Caco-2 (cell line): ENCODE measurements at regions of chr2 and their contacts with region 1.

Region 1: DNA sequence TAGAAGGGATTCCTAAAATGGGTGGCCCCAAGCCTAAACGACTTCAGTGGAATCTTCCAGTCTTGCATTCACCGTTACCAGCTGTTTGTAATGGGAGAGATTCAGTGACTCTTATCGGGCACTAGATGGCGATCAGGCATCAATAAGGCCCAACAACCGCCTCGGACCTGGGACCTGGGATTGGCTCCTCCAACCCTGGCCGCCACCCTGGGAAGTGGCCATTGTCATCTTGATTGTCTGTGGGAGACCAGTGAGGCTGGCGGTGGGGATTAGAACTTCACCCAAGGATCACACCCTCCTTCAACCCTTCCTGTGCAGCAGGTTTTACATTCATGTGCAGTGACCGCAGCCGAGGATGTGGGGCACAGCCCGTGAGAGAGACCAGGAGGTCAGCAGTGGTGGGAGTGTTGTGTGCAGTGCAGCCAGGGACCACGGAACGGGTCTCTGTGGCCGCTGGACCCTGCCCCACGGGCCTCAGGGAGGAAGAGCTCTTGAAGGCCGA is 85.3 kb downstream of the SPP2 start:
- DNase-seq: peak; percentile 83 to 91
- H3K4me3 ChIP-seq: peak overlapping the region; percentile 2; the same call in 1 of the 2 replicates
- H3K4me3 Mint-ChIP-seq: peak overlapping the region; percentile 57
- H3K27ac Mint-ChIP-seq: peak overlapping the region; percentile 87
- H3K4me1 ChIP-seq: peaks cover 28% of the 10 kb centered on the region
- H3K4me1 Mint-ChIP-seq: peaks cover 5% of the 10 kb centered on the region
- H3K27me3 ChIP-seq: no peaks in the 10 kb centered on the region
- H3K27me3 Mint-ChIP-seq: no peaks in the 10 kb centered on the region
- CTCF ChIP-seq: peak; percentile 59 to 70

Region 2: GRCh38 chr2:234169187-234169570 is 33.4 kb after region 1 on chr2:
- CTCF ChIA-PET with region 1: no interaction called
- POLR2A ChIA-PET with region 1: no interaction called
- intact Hi-C with region 1: loop called (anchors 1 kb)
- DNase-seq: no peak
- H3K4me3 ChIP-seq: no peak overlapping the region
- H3K4me3 Mint-ChIP-seq: no peak overlapping the region
- H3K27ac Mint-ChIP-seq: peak overlapping the region; percentile 93
- H3K4me1 ChIP-seq: peaks cover 51% of the 10 kb centered on the region
- H3K4me1 Mint-ChIP-seq: peaks cover 34% of the 10 kb centered on the region
- H3K27me3 ChIP-seq: no peaks in the 10 kb centered on the region
- H3K27me3 Mint-ChIP-seq: no peaks in the 10 kb centered on the region
- CTCF ChIP-seq: no peak

Region 3: DNA sequence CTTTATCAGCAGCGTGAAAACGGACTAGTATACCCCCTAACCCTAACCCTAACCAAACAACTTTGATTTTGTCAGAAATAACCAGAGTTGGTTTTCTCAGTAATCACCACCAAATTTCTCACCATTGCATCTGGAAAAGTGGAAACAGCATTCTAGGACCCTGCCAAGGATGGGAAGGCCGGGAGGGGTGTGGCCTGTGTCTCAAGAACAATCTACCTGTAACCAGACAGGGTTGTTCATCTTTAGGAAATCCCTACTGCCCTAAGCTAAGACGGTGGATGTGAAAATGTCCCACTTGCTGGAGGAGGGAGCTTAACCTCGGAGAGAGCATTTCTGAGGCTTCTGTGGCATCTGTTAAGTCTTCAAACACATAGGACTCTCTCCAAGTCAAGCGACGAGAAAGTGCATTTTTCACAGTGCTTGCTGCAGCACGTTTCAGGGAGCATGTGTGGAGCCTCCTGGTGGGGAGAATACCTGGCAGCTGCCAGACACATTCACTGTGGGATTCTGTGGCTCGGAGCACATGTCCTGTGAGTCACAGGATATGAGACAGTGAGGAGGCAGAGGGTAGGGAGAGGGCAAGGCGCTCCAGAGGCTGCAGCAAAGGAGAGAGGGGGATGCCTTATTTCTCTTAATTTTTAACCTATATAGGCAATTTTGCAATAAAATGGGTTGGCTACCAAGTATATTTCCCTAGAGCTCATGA is 122.2 kb after region 1 on chr2:
- CTCF ChIA-PET with region 1: interaction called, 5 read pairs
- POLR2A ChIA-PET with region 1: no interaction called
- intact Hi-C with region 1: loop called (anchors 1 kb)
- DNase-seq: peak; percentile 72 to 84
- H3K4me3 ChIP-seq: no peak overlapping the region
- H3K4me3 Mint-ChIP-seq: peak overlapping the region; percentile 47
- H3K27ac Mint-ChIP-seq: peak overlapping the region; percentile 89
- H3K4me1 ChIP-seq: peaks cover 45% of the 10 kb centered on the region
- H3K4me1 Mint-ChIP-seq: peaks cover 17% of the 10 kb centered on the region
- H3K27me3 ChIP-seq: no peaks in the 10 kb centered on the region
- H3K27me3 Mint-ChIP-seq: no peaks in the 10 kb centered on the region
- CTCF ChIP-seq: peak; percentile 46 to 70

Region 4: DNA sequence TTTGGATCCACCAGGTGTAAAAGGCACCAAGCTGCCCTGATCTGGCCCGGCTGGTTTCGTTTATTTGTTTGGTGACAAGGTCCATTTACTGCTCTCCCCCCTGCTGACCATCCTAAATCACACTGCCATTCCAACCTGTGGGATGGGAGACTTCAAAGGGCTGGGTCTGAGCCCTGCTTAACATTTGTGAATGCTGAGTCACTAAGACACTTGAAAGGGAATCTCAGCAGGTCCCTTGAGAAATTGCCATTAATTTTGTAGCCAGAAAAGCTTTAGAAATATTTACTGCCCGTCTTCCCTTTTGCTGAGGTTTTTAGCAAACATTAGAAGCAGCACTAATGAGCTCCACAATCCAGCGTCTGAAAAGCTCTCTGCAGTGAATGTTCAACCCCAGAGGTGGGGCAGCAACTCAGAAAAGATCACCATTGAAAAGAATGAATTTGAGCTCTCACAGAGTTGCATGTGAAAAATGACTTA is 227.3 kb after region 1 on chr2:
- CTCF ChIA-PET with region 1: interaction called, 6 read pairs
- POLR2A ChIA-PET with region 1: no interaction called
- intact Hi-C with region 1: loop called (anchors 1 kb)
- DNase-seq: peak; percentile 92 to 97
- H3K4me3 ChIP-seq: no peak overlapping the region
- H3K4me3 Mint-ChIP-seq: peak overlapping the region; percentile 60
- H3K27ac Mint-ChIP-seq: peak overlapping the region; percentile 92
- H3K4me1 ChIP-seq: peaks cover 67% of the 10 kb centered on the region
- H3K4me1 Mint-ChIP-seq: peaks cover 37% of the 10 kb centered on the region
- H3K27me3 ChIP-seq: no peaks in the 10 kb centered on the region
- H3K27me3 Mint-ChIP-seq: no peaks in the 10 kb centered on the region
- CTCF ChIP-seq: no peak

Region 5: GRCh38 chr2:234463626-234464290 is 328.0 kb after region 1 on chr2:
- CTCF ChIA-PET with region 1: no interaction called
- POLR2A ChIA-PET with region 1: no interaction called
- intact Hi-C with region 1: loop called (anchors 5 kb)
- DNase-seq: peak; percentile 51 to 67
- H3K4me3 ChIP-seq: no peak overlapping the region
- H3K4me3 Mint-ChIP-seq: peak overlapping the region; percentile 47
- H3K27ac Mint-ChIP-seq: peak overlapping the region; percentile 95
- H3K4me1 ChIP-seq: peaks cover 70% of the 10 kb centered on the region
- H3K4me1 Mint-ChIP-seq: peaks cover 33% of the 10 kb centered on the region
- H3K27me3 ChIP-seq: no peaks in the 10 kb centered on the region
- H3K27me3 Mint-ChIP-seq: no peaks in the 10 kb centered on the region
- CTCF ChIP-seq: no peak